WTC11 (cell line): ENCODE measurements at regions of chr1 and their contacts with region 1.

Region 1: DNA sequence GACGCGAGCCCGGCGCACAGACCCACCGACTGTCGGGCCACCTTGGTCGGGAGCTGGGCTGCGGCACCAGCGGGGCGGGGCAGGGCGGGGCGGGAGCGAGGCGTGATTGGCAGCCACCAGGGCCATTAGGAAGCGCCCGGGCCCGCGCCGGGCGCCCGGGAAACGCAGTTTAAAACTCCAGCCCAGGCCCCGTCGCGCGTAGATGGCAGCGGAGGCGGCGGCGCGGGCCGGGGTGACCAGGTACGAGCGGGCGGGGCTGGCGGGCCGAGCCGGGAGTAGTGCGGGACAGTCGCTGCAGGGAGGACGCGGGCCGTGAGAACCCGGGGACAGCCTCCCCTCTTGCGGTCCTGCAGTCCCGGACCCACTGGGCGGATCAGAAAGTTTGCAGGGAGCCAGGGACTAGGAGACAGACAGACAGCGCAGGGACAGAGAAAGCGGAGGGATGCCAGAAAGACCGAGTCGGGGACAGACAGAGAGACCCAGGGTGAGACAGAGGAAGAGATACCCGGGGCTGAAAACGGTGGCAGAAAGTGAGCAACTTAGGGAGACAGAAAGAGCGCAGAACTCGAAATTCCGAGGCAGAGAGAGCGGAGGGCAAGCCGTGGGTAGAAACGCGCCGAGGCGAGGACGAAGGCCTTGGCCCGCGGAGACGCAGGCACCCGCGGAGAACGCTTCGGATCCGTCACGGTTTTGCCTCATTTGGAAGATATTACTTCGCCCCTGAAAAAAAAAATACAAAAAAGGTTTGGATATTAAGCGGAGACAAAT is at the start of gene DMBX1:
- DNase-seq: peak; percentile 82
- ATAC-seq: peak; percentile 62
- H3K4me3 Mint-ChIP-seq: peak within 1 kb of the TSS; percentile 89
- H3K27ac Mint-ChIP-seq: no peak within 1 kb of the TSS
- H3K4me1 Mint-ChIP-seq: peaks cover 60% of the 10 kb centered on the region
- H3K27me3 Mint-ChIP-seq: peaks cover 99% of the 10 kb centered on the region
- CTCF ChIP-seq: no peak
- total RNA-seq, gene DMBX1: 1.7 to 3.7 TPM (median 1.8 TPM) in 3 replicates

Region 2: GRCh38 chr1:46379996-46380395 is 109.8 kb before region 1 on chr1:
- CTCF ChIA-PET with region 1: no interaction called
- POLR2A ChIA-PET with region 1: no interaction called
- DNase-seq: no peak
- ATAC-seq: no peak
- H3K4me3 Mint-ChIP-seq: no peak overlapping the region
- H3K27ac Mint-ChIP-seq: no peak overlapping the region
- H3K4me1 Mint-ChIP-seq: peaks cover 8% of the 10 kb centered on the region
- H3K27me3 Mint-ChIP-seq: peaks cover 6% of the 10 kb centered on the region; the same call in 1 of the 2 replicates
- CTCF ChIP-seq: no peak

Region 3: DNA sequence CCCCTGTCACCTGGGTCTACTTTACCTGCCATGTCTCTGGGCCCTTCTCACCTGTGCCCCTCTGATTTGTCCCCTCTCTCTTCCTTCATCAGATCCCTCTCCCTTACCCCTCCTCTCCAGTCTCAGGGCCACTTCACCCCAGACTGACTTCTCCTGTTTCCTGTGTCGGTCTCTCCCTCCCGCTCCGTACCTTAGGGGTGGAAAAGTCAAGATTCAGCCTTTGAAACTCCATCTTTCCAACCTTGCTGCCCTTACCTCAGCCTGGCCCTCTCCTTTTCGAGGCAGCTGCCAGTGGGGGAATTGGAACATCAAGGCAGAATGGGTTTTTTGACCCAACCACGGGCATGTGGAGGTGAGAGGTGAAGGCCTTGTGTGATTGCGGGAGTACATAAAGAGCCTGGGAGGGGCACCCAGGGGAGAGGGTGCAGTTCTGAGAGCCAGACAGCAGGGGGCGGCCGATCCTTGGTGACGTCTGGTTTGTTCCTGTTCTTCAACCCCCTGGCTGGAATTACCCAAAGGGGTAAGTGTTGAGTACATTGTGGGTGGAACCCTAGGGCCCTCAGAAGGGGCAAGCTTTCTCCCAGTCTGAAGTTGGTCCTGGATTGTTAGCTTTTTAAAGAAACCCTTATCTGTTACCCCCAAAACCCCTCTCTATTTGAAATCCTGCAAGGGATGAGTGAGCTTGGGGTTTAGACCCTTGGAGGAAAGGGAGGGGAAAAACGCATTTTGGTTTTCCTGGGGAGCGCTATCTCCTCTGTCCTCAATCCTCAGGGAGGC is 12.5 kb before region 1 on chr1:
- CTCF ChIA-PET with region 1: interaction called, 16 read pairs
- POLR2A ChIA-PET with region 1: no interaction called
- DNase-seq: peak; percentile 85
- ATAC-seq: peak; percentile 70
- H3K4me3 Mint-ChIP-seq: no peak overlapping the region
- H3K27ac Mint-ChIP-seq: no peak overlapping the region
- H3K4me1 Mint-ChIP-seq: peaks cover 31% of the 10 kb centered on the region
- H3K27me3 Mint-ChIP-seq: peaks cover 71% of the 10 kb centered on the region
- CTCF ChIP-seq: peak; percentile 88

Region 4: DNA sequence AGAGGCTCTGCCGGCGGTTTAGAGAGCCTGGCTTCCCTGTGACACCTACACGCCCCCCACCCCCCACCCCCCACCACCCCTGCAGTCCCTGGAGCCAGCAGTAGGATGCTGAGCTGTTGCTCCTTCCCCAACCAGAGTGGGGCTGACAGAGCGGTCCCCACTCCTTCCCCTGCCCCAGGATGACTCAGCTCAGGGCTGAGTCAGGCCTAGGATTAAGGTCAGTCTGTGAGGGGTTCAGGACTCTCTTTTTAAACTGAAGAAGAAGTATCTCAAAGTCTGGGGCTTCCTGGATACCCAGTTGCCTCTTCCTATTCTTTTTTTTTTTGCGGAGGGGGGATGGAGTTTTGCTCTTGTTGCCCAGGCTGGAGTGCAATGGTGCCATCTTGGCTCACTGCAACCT is 18.9 kb after region 1 on chr1:
- CTCF ChIA-PET with region 1: interaction called, 10 read pairs
- POLR2A ChIA-PET with region 1: no interaction called
- DNase-seq: no peak
- ATAC-seq: no peak; the same call in 1 of the 2 replicates
- H3K4me3 Mint-ChIP-seq: no peak overlapping the region
- H3K27ac Mint-ChIP-seq: no peak overlapping the region
- H3K4me1 Mint-ChIP-seq: peaks cover 25% of the 10 kb centered on the region
- H3K27me3 Mint-ChIP-seq: peaks cover 15% of the 10 kb centered on the region
- CTCF ChIP-seq: no peak

Region 5: DNA sequence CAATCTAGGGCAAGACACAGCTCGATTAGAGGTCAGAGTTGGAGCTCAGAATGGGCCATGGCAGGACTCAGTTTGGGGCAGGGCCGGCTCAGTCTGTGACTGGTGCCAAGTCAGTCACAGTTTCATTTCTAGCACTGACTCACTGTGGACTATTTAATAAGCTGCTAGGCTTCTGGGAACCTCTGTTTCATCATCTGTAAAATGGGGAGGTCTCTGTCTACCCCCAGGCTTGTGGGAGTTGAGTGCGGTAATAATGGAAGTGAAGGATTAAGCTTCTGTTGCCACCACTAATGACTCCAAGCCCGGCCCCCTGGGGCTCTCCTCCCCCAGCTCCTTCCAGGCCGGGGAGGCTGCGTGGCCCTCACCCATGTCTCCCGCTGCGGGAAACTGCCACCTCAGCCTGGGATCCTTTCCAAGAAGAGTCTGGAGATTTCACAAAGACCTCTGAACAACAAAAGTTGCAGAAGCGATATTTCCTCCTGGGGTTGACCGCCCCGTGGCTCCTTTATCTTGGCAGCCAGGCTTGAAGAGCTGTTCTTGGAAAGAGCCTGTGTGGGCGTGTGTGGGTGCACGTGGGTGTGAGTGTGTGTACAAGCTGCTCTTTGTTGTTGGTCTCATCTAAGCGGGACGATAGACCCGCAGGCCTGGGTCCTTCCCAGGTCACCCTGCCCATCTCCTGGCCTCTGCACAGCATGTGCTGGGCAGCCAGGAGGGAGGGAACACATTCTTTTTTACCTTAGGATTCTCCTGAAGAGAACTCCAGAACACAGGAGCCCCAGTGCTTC is 32.6 kb after region 1 on chr1:
- CTCF ChIA-PET with region 1: interaction called, 201 read pairs
- POLR2A ChIA-PET with region 1: interaction called, 10 read pairs
- DNase-seq: no peak
- ATAC-seq: no peak
- H3K4me3 Mint-ChIP-seq: no peak overlapping the region
- H3K27ac Mint-ChIP-seq: no peak overlapping the region
- H3K4me1 Mint-ChIP-seq: peaks cover 71% of the 10 kb centered on the region
- H3K27me3 Mint-ChIP-seq: peaks cover 64% of the 10 kb centered on the region
- CTCF ChIP-seq: no peak

Region 6: DNA sequence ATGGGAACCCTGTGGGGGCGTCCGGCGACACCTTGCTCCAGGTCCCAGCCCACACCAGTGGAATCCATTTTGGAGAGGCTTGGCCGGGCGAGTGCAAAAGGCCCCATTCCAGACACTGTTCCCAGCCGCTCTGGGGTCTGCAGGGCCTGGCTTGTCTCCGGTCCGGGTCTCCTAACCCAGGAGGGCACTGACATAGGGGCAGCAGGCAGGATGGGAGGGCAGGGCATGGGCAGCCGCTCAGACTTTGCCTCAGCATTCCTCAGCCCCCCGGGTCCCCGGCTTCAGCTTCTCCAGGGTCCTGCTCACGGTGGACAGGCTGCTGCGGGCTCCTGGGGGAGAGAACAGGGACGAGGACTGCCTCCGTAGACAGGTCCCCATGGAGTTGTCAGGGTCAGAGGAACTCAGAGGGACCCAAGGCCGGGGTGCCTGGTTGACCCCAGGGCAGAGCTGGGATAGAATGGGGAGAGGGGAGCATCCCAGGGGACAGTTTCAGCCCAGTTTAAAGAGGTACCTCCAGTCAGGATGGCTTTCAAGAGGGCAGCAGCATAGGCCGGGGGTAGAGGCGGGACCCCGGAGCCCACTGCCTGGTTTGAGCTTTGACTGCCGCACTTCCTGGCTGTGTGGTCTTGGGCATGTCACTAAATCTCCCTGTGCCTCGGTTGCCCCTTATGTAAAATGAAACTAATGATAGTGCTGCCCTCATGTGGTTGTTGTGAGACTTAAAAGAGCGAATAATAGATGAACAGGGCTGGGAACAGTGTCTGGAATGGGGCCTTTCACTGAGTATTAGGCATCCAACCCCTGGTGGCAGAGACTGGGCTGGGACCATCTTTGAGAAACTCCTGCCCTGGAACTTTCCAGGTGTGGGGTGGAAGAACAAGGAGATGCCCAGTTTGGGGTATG is 57.9 kb after region 1 on chr1:
- CTCF ChIA-PET with region 1: interaction called, 11 read pairs
- POLR2A ChIA-PET with region 1: no interaction called
- DNase-seq: no peak
- ATAC-seq: peak; percentile 44
- H3K4me3 Mint-ChIP-seq: no peak overlapping the region
- H3K27ac Mint-ChIP-seq: no peak overlapping the region
- H3K4me1 Mint-ChIP-seq: peaks cover 34% of the 10 kb centered on the region
- H3K27me3 Mint-ChIP-seq: peaks cover 47% of the 10 kb centered on the region
- CTCF ChIP-seq: 0 out of 2 replicates have a peak, but pooled peaks have one; percentile 25

Region 7: GRCh38 chr1:46747683-46748288 is 258.0 kb after region 1 on chr1:
- CTCF ChIA-PET with region 1: no interaction called
- POLR2A ChIA-PET with region 1: no interaction called
- DNase-seq: peak; percentile 68
- ATAC-seq: peak; percentile 100
- H3K4me3 Mint-ChIP-seq: no peak overlapping the region
- H3K27ac Mint-ChIP-seq: no peak overlapping the region
- H3K4me1 Mint-ChIP-seq: no peaks in the 10 kb centered on the region
- H3K27me3 Mint-ChIP-seq: peaks cover 12% of the 10 kb centered on the region
- CTCF ChIP-seq: peak; percentile 38; the same call in 1 of the 2 replicates